Gastrocnemius medialis (tissue), 4 donors: ENCODE measurements at regions of chr5 and their contacts with region 1.

Region 1: DNA sequence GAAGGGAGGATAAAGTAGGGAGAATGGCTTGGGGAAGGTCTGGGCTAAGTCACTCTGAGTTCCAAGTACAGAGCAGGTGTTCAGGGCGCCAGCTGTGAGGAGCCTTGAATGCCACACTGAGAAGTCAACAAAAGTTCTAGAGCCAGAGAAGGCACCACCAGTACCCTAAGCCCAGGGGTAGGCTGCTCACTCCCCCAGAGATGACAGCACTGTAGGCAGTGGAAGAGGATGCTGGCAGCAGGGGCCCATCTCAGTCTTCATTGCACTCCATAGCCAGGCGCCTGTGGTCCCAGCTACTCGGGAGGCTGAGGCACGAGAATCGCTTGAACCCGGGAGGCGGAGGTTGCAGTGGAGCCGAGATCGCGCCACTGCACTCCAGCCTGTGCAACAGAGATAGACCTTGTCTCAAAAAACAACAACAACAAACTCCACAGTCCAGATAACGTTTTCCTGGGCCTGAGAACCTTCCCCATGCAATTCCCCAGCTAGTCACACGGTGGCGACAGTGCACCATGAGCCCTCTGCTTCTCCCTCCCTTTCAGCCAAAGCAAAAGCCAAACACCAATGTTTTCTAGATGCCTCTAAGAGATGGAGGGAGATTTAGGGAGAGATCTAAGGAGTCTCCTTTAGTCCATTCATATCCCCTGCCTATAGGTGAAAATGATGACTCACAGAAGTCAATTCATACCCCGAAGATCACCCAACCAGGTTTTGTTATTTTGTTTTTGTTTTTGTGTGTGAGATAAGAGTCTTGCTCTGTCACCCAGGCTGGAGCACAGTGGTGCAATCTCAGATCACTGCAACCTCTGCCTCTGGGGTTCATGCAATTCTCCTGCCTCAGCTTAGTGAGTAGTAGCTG is 19.8 kb upstream of the NSD1 start:
- DNase-seq: peak; percentile 47 to 68
- ATAC-seq: peak; percentile 69 to 70
- H3K4me3 ChIP-seq: peak overlapping the region in 1 of 4 donors; percentile 22
- H3K27ac ChIP-seq: peak overlapping the region in 2 of 4 donors; percentile 16 to 51
- H3K4me1 ChIP-seq: peaks cover 7 to 10% of the 10 kb centered on the region in 2 donors
- H3K27me3 ChIP-seq: no peaks in the 10 kb centered on the region
- CTCF ChIP-seq: peak; percentile 88 to 99 (median 96)
- POLR2A ChIP-seq: no peak

Region 2: DNA sequence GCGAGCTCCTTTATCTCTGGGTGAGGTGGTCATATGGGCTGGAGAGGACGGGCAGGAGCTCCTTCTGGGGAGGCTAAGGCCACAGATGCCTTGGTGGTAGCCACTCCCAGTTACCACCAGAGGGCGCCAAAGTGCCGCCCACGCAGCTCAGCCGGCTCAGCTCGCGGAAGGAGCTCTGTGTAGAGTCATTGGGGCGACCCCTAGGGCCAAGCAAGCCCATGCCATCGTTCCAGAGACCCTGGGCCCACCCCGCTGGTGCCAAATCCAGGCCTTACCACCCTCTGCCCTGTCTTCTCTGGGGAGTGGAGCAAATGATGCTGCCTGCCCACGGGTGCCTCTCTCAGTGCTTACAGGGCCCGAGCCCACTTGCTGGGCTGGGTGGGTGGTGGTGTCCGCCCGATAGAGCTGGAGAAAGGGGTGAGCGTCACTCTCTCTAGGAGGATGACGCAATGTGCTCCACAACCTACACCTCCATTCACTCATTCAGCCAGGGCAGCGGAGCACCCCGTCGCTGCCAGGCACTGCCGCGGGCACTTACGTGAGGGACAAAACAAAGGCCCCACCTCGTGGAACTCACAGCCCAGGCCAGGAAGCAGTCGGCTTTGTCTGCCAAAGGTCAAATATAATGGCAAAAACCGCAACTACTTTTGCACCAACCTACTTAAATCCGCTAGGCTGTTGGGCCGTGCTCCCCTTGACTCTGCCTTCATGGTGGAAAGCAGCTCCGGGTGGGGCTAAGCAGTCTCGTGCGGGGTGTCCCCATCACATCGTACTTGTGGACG is 452.7 kb before region 1 on chr5:
- in situ Hi-C with region 1: loop called in 1 of 4 experiments (anchors 25 kb)
- intact Hi-C with region 1: no loop called
- DNase-seq: peak in 1 of 2 donors; percentile 40
- ATAC-seq: peak; percentile 59 to 82
- H3K4me3 ChIP-seq: no peak overlapping the region
- H3K27ac ChIP-seq: no peak overlapping the region
- H3K4me1 ChIP-seq: peaks cover 0 to 4% of the 10 kb centered on the region in 2 donors
- H3K27me3 ChIP-seq: peaks cover 15 to 21% (median 18%) of the 10 kb centered on the region in 3 donors
- CTCF ChIP-seq: peak; percentile 79 to 98 (median 91)
- POLR2A ChIP-seq: no peak

Region 3: DNA sequence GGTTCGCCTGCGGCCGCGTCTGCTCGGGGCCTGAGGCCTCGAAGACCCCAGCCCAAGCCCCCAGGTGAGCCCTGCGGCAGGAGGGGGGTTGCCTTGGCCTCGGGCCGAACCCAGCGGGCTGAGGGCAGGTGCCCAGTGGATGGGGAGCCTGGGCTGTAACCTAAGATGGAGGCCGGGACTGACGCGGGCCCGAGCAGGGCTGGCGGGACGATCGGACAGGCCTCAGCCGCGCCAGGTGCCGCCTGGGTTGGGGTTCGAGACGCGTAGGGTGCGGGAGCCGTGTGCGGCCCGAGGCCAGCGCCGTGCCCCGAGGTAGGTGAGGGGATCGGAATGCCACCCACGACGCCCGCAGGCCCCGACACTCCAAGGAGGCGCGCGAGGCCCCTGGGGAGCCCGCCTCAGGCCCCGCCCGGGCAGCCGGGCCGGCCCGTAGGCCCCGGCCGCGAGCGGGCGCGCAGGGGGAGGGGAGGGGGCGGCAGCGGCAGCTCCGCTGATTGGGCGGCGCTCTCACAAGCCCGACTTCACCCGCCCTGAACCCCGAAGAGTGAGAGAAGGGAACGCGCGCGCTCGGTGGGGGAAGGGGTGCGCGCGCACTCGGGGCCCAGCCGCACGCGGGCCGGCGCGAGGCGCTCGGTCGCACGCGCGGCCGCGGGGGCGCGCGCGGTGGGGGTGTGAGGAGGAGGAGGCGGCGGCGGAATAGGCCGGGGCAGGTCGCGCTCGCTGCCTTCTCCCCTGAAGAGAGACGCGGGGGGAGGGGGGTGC is 19.5 kb after region 1 on chr5 and contains the start of gene NSD1:
- in situ Hi-C with region 1: no loop called
- intact Hi-C with region 1: loop called (anchors 1 kb)
- DNase-seq: peak; percentile 76 to 84
- ATAC-seq: peak; percentile 71 to 80
- H3K4me3 ChIP-seq: peak within 1 kb of the TSS; percentile 76 to 93 (median 86)
- H3K27ac ChIP-seq: peak within 1 kb of the TSS; percentile 89 to 92 (median 90)
- H3K4me1 ChIP-seq: peaks cover 35 to 38% of the 10 kb centered on the region in 2 donors
- H3K27me3 ChIP-seq: no peaks in the 10 kb centered on the region
- CTCF ChIP-seq: no peak
- POLR2A ChIP-seq: peak; percentile 70 to 74
- total RNA-seq, gene NSD1: 25.4 to 32.7 (median 29.0) TPM

Region 4: DNA sequence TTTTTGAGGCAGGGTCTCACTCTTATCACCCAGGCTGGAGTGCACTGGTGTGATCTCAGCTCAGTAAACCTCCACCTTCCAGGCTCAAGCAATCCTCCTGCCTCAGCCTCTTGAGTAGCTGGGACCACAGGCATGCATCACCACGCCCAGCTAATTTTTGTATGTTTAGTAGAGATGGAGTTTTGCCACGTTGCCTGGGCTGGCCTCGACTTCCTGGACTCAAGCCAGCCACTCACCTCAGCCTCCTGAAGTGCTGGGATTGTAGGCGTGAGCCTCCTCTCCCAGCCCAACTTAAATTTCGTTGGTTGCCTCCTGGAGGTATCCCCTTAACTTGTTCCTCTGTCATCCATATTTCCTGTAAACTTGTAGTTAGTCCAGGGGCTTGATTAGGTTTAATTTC is 142.5 kb after region 1 on chr5:
- in situ Hi-C with region 1: loop called in 1 of 4 experiments (anchors 25 kb)
- intact Hi-C with region 1: loop called (anchors 5 kb)
- DNase-seq: no peak
- ATAC-seq: no peak
- H3K4me3 ChIP-seq: no peak overlapping the region
- H3K27ac ChIP-seq: no peak overlapping the region
- H3K4me1 ChIP-seq: peaks cover 5 to 12% of the 10 kb centered on the region in 2 donors
- H3K27me3 ChIP-seq: no peaks in the 10 kb centered on the region
- CTCF ChIP-seq: no peak
- POLR2A ChIP-seq: no peak

Region 5: GRCh38 chr5:177454397-177455035 is 340.7 kb after region 1 on chr5:
- in situ Hi-C with region 1: no loop called
- intact Hi-C with region 1: loop called (anchors 10 kb)
- DNase-seq: peak; percentile 68 to 86
- ATAC-seq: peak; percentile 67 to 68
- H3K4me3 ChIP-seq: peak overlapping the region; percentile 55 to 93 (median 73)
- H3K27ac ChIP-seq: peak overlapping the region; percentile 67 to 77 (median 70)
- H3K4me1 ChIP-seq: peaks cover 9 to 25% of the 10 kb centered on the region in 2 donors
- H3K27me3 ChIP-seq: peaks cover 2 to 12% (median 9%) of the 10 kb centered on the region in 3 donors
- CTCF ChIP-seq: peak; percentile 87 to 98 (median 97)
- POLR2A ChIP-seq: peak; percentile 5 to 16